CD4-positive, alpha-beta T cell (primary cell): ENCODE measurements at regions of chr12 and their contacts with region 1.

Region 1: DNA sequence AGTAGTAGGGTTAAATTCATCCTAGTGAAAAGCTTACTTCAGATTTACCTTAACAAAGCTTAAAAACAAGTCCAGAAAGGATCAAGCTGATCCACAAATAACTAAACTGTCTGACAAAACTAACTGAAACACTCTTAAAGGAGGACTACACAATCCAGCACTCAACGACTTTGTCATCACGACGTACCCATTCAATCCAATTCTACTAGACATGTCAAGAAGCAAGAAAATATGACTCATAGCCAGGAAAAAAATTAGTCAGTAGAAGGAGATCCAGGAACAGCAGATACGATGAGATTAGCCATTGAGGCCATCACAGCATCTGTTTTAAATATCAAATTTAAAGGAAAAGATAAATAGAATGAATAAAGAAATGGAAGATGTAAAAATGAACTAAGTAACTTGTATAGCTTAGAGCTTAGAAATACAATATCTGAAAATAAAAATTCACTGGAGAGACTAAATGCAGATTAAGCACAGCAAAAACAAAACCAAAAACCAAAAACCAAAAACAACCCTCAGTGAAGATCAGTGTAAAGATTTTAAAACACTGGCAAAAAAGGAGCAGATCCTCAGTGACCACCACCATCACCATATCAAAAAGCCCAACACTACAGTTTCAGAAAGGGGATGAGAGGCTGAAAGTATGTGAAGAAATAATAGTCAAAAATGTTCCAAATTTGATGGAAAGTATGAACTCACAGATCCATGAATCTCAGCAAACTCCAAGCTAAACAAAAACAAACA is 95.0 kb upstream of the CCND2 start:
- DNase-seq: no peak
- ATAC-seq: no peak
- H3K4me3 ChIP-seq: no peak overlapping the region
- H3K4me3 Mint-ChIP-seq: no peak overlapping the region
- H3K27ac ChIP-seq: no peak overlapping the region
- H3K27ac Mint-ChIP-seq: no peak overlapping the region
- H3K4me1 ChIP-seq: no peaks in the 10 kb centered on the region
- H3K4me1 Mint-ChIP-seq: no peaks in the 10 kb centered on the region
- H3K27me3 ChIP-seq: no peaks in the 10 kb centered on the region
- H3K27me3 Mint-ChIP-seq: no peaks in the 10 kb centered on the region
- CTCF ChIP-seq: no peak

Region 2: GRCh38 chr12:4240161-4240783 is 61.7 kb after region 1 on chr12:
- CTCF ChIA-PET with region 1: no interaction called
- POLR2A ChIA-PET with region 1: no interaction called
- intact Hi-C with region 1: loop called in 1 of 2 experiments (anchors 1 kb)
- DNase-seq: no peak
- ATAC-seq: no peak
- H3K4me3 ChIP-seq: no peak overlapping the region
- H3K4me3 Mint-ChIP-seq: no peak overlapping the region
- H3K27ac ChIP-seq: no peak overlapping the region
- H3K27ac Mint-ChIP-seq: no peak overlapping the region
- H3K4me1 ChIP-seq: peaks cover 11% of the 10 kb centered on the region
- H3K4me1 Mint-ChIP-seq: no peaks in the 10 kb centered on the region
- H3K27me3 ChIP-seq: peaks cover 0 to 2% of the 10 kb centered on the region in 2 experiments
- H3K27me3 Mint-ChIP-seq: peaks cover 15% of the 10 kb centered on the region
- CTCF ChIP-seq: no peak